Breast epithelium (tissue), 4 donors: ENCODE measurements at regions of chr7 and their contacts with region 1.

Region 1: DNA sequence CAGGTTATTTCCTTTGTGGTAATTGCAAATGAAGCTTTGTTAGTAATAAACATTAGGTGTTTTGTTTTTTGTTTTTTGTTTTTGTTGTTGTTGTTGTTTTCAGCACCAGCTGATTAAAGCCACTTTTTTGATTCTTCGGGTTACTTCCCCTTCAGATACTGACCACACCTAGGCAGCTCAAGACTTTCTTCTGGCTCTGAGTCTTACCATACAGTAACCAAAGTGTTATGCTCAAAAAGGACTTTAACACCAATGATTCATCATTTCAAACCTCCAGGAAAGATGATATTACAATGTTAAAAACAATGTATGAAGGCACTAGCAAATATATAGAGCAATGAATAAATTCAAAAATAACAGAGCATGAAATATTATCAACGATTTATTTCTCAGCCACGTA is 265.2 kb upstream of the SP8 start:
- DNase-seq: no peak
- H3K4me3 ChIP-seq: no peak overlapping the region
- H3K27ac ChIP-seq: no peak overlapping the region
- H3K4me1 ChIP-seq: no peaks in the 10 kb centered on the region
- H3K27me3 ChIP-seq: no peaks in the 10 kb centered on the region
- CTCF ChIP-seq: no peak
- POLR2A ChIP-seq: no peak

Region 2: DNA sequence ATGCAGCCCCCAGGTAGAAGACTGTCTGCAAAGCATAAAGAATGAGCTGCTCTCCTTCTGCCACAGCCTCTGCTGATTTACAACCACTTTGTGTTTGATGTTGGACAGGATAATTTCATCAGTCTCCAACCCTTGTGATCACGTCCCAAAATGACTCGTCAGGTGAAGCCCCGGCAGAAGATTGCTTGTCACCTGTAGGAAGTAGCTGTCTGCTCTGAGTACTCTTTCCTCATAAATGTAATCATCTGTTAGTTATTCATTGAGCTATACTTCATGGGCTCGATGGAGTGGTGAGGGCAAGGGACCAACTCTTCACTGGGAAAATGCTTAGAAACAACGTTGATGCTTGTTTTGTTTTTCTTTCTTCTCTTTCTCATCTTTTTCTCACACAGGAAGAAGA is 25.7 kb after region 1 on chr7:
- intact Hi-C with region 1: loop called (anchors 2 kb)
- DNase-seq: no peak
- H3K4me3 ChIP-seq: no peak overlapping the region
- H3K27ac ChIP-seq: no peak overlapping the region
- H3K4me1 ChIP-seq: no peaks in the 10 kb centered on the region
- H3K27me3 ChIP-seq: peaks cover 0 to 6% of the 10 kb centered on the region in 2 donors
- CTCF ChIP-seq: no peak
- POLR2A ChIP-seq: no peak